Aorta (tissue), 5 donors: ENCODE measurements at regions of chr2 and their contacts with region 1.

Region 1: GRCh38 chr2:206981739-206982340 is 42.5 kb downstream of the CPO start:
- DNase-seq: peak; percentile 85 to 93
- ATAC-seq: peak; percentile 86
- H3K4me3 ChIP-seq: no peak overlapping the region
- H3K27ac ChIP-seq: no peak overlapping the region
- H3K4me1 ChIP-seq: no peaks in the 10 kb centered on the region
- H3K27me3 ChIP-seq: no peaks in the 10 kb centered on the region

Region 2: DNA sequence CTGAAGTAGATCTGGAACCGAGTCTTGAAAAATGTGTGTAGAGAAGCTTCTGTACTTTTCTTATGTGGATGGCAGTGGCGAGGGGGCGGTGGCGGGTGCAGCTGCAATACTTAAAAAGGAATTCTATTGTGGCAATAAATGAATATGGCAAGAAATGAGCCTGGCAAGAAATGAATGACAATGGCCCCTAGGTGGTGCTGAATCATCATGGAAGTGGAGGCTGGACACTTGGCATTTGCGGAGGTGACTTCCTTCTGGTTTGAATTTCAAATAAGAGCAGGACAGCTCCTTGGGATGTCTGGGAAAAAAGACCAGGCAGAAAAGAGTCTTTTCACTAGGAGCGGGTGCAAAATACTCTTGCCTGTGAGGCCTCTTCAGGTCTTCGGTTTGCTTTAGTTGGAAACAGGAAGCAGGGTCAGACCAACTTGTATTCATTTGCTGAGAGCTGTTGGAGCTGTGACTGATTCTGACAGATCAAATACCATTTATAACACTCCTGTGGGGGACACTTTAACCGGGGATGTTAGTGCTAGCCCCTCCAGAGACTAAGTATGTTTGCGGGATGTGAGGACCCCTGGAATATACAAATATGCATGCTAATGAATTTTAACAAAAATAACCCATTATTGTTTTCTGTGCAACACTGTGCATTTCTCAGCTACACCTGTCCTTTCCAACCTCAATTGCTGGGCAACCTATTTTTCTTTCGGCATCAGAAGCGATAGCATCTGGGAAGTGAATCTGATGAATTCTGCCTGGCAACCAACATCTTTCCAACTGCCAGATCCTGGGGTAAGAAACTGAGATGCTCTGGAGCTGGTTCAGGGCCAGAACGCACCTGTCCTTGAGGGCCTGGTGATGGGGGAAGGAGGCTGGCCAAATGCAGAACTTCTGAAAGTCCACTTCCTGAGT is 181.1 kb before region 1 on chr2:
- intact Hi-C with region 1: loop called (anchors 5 to 10 kb)
- DNase-seq: peak; percentile 58 to 78
- ATAC-seq: peak; percentile 77
- H3K4me3 ChIP-seq: no peak overlapping the region
- H3K27ac ChIP-seq: no peak overlapping the region
- H3K4me1 ChIP-seq: no peaks in the 10 kb centered on the region
- H3K27me3 ChIP-seq: no peaks in the 10 kb centered on the region

Region 3: GRCh38 chr2:207103132-207103531 is 121.3 kb after region 1 on chr2:
- intact Hi-C with region 1: no loop called
- DNase-seq: no peak
- ATAC-seq: no peak
- H3K4me3 ChIP-seq: no peak overlapping the region
- H3K27ac ChIP-seq: no peak overlapping the region
- H3K4me1 ChIP-seq: peaks cover 2 to 8% of the 10 kb centered on the region in 2 donors
- H3K27me3 ChIP-seq: no peaks in the 10 kb centered on the region

Region 4: GRCh38 chr2:207334624-207335371 is 353.0 kb after region 1 on chr2:
- intact Hi-C with region 1: loop called in 1 of 2 experiments (anchors 10 kb)
- DNase-seq: peak; percentile 84 to 86
- ATAC-seq: peak; percentile 86
- H3K4me3 ChIP-seq: peak overlapping the region in 1 of 2 donors; percentile 31
- H3K27ac ChIP-seq: peak overlapping the region in 1 of 2 donors; percentile 88
- H3K4me1 ChIP-seq: no peaks in the 10 kb centered on the region
- H3K27me3 ChIP-seq: no peaks in the 10 kb centered on the region

Region 5: GRCh38 chr2:207341804-207342203 is 360.0 kb after region 1 on chr2:
- intact Hi-C with region 1: loop called (anchors 10 kb)
- DNase-seq: no peak
- ATAC-seq: no peak
- H3K4me3 ChIP-seq: no peak overlapping the region
- H3K27ac ChIP-seq: no peak overlapping the region
- H3K4me1 ChIP-seq: no peaks in the 10 kb centered on the region
- H3K27me3 ChIP-seq: no peaks in the 10 kb centered on the region

Region 6: GRCh38 chr2:207473049-207473930 is 491.4 kb after region 1 on chr2:
- intact Hi-C with region 1: loop called (anchors 1 to 2 kb)
- DNase-seq: no peak
- ATAC-seq: peak; percentile 79
- H3K4me3 ChIP-seq: peak overlapping the region in 1 of 2 donors; percentile 2
- H3K27ac ChIP-seq: no peak overlapping the region
- H3K4me1 ChIP-seq: peaks cover 0 to 2% of the 10 kb centered on the region in 2 donors
- H3K27me3 ChIP-seq: no peaks in the 10 kb centered on the region